Activated T-helper 2 cell treated with anti-CD3 and anti-CD28 coated beads, Interferon-gamma antibody, Interleukin-2, Interleukin-4, amounts not matched to agents 10 μg/mL and 5 μg/mL and 100 μg/mL, durations not matched to agents 14 hours and 24 hours and 36 hours (primary cell): ENCODE measurements at regions of chr1 and their contacts with region 1.

Region 1: GRCh38 chr1:78617615-78618026 is 2.6 kb upstream of the IFI44L start:
- DNase-seq: peak; percentile 47
- H3K4me3 Mint-ChIP-seq: no peak overlapping the region
- H3K27ac Mint-ChIP-seq: no peak overlapping the region
- H3K4me1 Mint-ChIP-seq: peaks cover 38% of the 10 kb centered on the region
- H3K27me3 Mint-ChIP-seq: peaks cover 12% of the 10 kb centered on the region

Region 2: GRCh38 chr1:78004719-78005447 is 612.7 kb before region 1 on chr1 and contains the start of gene DNAJB4:
- intact Hi-C with region 1: loop called (anchors 10 kb)
- DNase-seq: peak; percentile 63
- H3K4me3 Mint-ChIP-seq: peak within 1 kb of the TSS; percentile 94
- H3K27ac Mint-ChIP-seq: peak within 1 kb of the TSS; percentile 98
- H3K4me1 Mint-ChIP-seq: peaks cover 33% of the 10 kb centered on the region
- H3K27me3 Mint-ChIP-seq: no peaks in the 10 kb centered on the region
- total RNA-seq, gene DNAJB4: 12.5 and 14.6 TPM in 2 replicates

Region 3: GRCh38 chr1:78607334-78607927 is 10.2 kb before region 1 on chr1:
- intact Hi-C with region 1: no loop called
- DNase-seq: no peak
- H3K4me3 Mint-ChIP-seq: no peak overlapping the region
- H3K27ac Mint-ChIP-seq: no peak overlapping the region
- H3K4me1 Mint-ChIP-seq: no peaks in the 10 kb centered on the region
- H3K27me3 Mint-ChIP-seq: peaks cover 32% of the 10 kb centered on the region

Region 4: GRCh38 chr1:78649628-78650027 is 32.0 kb after region 1 on chr1 and contains the start of gene IFI44:
- intact Hi-C with region 1: loop called (anchors 1 kb)
- DNase-seq: peak; percentile 40
- H3K4me3 Mint-ChIP-seq: peak within 1 kb of the TSS; percentile 89
- H3K27ac Mint-ChIP-seq: peak within 1 kb of the TSS; percentile 88
- H3K4me1 Mint-ChIP-seq: peaks cover 59% of the 10 kb centered on the region
- H3K27me3 Mint-ChIP-seq: no peaks in the 10 kb centered on the region
- total RNA-seq, gene IFI44: 14.4 and 16.0 TPM in 2 replicates

Region 5: DNA sequence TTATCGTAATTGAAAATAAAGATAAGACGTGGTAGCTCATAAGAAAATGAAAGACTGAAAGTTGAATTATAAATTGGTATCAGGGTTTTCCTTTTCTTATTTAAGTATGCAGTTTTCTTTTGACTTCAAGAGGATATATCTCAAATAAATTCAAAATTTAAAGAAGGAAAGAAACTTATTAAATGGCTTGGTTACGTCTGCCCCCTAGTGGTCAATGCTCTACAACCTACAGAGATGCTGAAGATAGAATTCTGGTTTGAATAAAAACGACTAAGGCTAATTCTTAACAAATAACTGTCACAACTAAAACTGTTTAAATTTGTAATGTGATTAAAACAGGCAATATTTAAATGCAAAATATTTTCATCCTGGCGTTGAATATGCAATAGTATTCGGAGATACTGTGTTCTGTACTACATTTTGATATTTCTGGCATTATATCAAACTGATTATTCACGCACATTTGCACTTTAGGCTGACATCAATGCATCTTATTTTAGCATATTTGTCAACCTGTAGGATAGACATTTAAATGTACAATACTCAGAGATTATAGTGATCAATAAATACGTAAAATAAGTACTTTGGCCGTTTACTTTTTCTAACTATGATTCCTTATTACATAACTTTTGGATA is 58.8 kb after region 1 on chr1:
- intact Hi-C with region 1: loop called (anchors 1 kb)
- DNase-seq: no peak
- H3K4me3 Mint-ChIP-seq: no peak overlapping the region
- H3K27ac Mint-ChIP-seq: no peak overlapping the region
- H3K4me1 Mint-ChIP-seq: peaks cover 19% of the 10 kb centered on the region
- H3K27me3 Mint-ChIP-seq: peaks cover 8% of the 10 kb centered on the region

Region 6: DNA sequence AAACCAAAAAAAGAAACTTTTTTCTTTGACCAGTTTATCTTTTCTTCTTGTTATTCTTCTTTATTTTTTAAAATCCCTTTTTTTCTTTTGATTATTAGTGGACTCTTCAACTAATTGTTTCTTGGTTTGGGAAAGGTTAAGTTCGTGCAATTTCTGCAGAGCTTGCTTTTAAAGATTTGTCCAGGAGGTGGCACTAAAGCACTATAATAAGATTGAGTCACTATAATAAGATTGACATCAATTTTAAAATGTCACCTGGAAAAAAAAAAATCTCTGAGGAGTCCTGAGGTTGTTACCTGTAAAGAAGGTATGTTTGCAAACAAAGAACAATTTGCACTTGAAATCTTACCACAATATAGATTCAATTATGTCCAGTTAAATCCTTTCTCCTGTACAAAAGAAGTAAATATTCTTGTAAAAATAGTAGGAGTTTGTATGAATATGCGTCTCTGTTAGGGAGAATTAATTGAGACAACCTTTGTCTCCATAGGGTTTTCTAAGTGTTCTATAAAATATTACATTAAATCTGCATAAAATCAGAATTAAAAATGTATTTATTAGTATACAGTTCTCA is 222.2 kb after region 1 on chr1:
- intact Hi-C with region 1: loop called (anchors 10 kb)
- DNase-seq: no peak
- H3K4me3 Mint-ChIP-seq: no peak overlapping the region
- H3K27ac Mint-ChIP-seq: no peak overlapping the region
- H3K4me1 Mint-ChIP-seq: peaks cover 10% of the 10 kb centered on the region
- H3K27me3 Mint-ChIP-seq: peaks cover 2% of the 10 kb centered on the region

Region 7: GRCh38 chr1:79667848-79668696 is 1050.5 kb after region 1 on chr1:
- intact Hi-C with region 1: no loop called
- DNase-seq: no peak
- H3K4me3 Mint-ChIP-seq: no peak overlapping the region
- H3K27ac Mint-ChIP-seq: no peak overlapping the region
- H3K4me1 Mint-ChIP-seq: no peaks in the 10 kb centered on the region
- H3K27me3 Mint-ChIP-seq: no peaks in the 10 kb centered on the region